Gastrocnemius medialis (tissue), 4 donors: ENCODE measurements at regions of chr14 and their contacts with region 1.

Region 1: GRCh38 chr14:58297762-58298476 is 436 bp upstream of the ARID4A start:
- DNase-seq: peak; percentile 99
- ATAC-seq: peak; percentile 93 to 96
- H3K4me3 ChIP-seq: peak overlapping the region; percentile 92 to 99 (median 97)
- H3K27ac ChIP-seq: peak overlapping the region; percentile 89 to 99 (median 97)
- H3K4me1 ChIP-seq: peaks cover 37 to 56% of the 10 kb centered on the region in 2 donors
- H3K27me3 ChIP-seq: no peaks in the 10 kb centered on the region
- CTCF ChIP-seq: peak in 3 of 5 experiments; percentile 12 to 29 (median 20)
- POLR2A ChIP-seq: peak in 1 of 2 donors; percentile 37

Region 2: DNA sequence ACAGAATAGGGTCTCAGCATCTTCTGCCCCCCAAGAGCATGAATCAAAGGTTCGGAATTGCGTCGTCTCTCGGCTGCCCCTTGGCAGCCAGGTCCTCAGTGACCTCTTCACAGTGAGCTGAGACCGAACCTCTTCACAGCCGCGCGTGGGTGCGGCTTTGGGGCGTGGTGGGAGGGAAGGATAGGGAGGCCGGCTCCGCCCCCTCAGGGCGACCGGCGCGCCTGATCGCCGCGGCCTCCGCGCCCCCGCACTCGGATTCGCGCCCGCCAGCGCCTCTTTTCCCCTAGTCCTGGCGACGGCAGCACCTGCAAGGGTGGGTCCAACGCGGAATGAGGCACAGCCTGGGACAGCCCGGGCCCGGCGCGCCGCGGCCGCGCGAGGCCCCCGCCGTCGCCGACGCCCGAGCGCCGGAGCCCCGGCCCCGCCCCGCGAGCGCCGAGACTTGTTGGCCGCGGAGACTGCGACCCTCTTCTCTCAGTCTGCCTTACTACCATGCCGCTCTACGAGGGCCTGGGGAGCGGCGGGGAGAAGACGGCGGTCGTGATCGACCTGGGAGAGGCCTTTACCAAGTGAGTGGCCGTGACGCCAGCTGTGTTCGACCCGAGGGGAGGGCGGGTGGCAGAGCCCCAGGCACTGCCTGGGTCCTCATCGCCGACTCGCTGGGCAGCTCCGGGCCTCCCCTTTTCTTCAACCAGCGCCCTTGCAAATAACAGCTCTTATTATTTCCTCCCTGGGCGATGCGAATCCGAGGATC is 98.0 kb before region 1 on chr14 and contains the start of gene ACTR10:
- in situ Hi-C with region 1: no loop called
- intact Hi-C with region 1: loop called (anchors 2 kb)
- DNase-seq: peak; percentile 68 to 83
- ATAC-seq: peak; percentile 96
- H3K4me3 ChIP-seq: peak within 1 kb of the TSS; percentile 87 to 94 (median 90)
- H3K27ac ChIP-seq: peak within 1 kb of the TSS; percentile 92 to 94 (median 93)
- H3K4me1 ChIP-seq: peaks cover 4 to 14% of the 10 kb centered on the region in 2 donors
- H3K27me3 ChIP-seq: no peaks in the 10 kb centered on the region
- CTCF ChIP-seq: peak in 1 of 5 experiments; percentile 15
- POLR2A ChIP-seq: peak; percentile 41 to 54
- total RNA-seq, gene ACTR10: 70.6 to 104 (median 88.8) TPM

Region 3: GRCh38 chr14:58244556-58245387 is 53.1 kb before region 1 on chr14 and contains the start of gene PSMA3:
- in situ Hi-C with region 1: loop called in 3 of 4 experiments (anchors 10 kb)
- intact Hi-C with region 1: loop called (anchors 1 kb)
- DNase-seq: peak; percentile 98
- ATAC-seq: peak; percentile 92 to 96
- H3K4me3 ChIP-seq: peak within 1 kb of the TSS; percentile 70 to 95 (median 78)
- H3K27ac ChIP-seq: peak within 1 kb of the TSS; percentile 94 to 99 (median 96)
- H3K4me1 ChIP-seq: peaks cover 27 to 33% of the 10 kb centered on the region in 2 donors
- H3K27me3 ChIP-seq: no peaks in the 10 kb centered on the region
- CTCF ChIP-seq: peak in 1 of 5 experiments; percentile 2
- POLR2A ChIP-seq: peak; percentile 89 to 92
- total RNA-seq, gene PSMA3: 200 to 301 (median 217) TPM

Region 4: DNA sequence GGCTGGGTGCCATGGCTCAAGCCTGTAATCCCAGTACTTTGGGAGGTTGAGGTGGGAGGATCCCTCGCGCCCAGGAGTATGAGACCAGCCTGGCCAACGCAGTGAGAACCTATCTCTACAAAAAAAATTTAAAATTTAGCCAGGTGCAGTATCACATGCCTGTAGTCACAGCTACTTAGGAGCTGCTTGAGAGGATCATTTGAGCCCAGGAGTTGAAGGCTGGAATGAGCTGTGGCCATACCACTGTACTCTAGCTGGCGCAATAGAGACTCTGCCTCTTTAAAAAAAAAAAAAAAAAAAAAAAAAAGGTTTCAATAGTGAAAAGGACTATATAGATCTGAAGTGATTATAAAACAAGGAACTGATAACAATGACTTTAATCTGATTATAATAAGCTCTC is 39.8 kb before region 1 on chr14:
- in situ Hi-C with region 1: no loop called
- intact Hi-C with region 1: no loop called
- DNase-seq: no peak
- ATAC-seq: no peak
- H3K4me3 ChIP-seq: no peak overlapping the region
- H3K27ac ChIP-seq: no peak overlapping the region
- H3K4me1 ChIP-seq: no peaks in the 10 kb centered on the region
- H3K27me3 ChIP-seq: no peaks in the 10 kb centered on the region
- CTCF ChIP-seq: no peak
- POLR2A ChIP-seq: no peak

Region 5: DNA sequence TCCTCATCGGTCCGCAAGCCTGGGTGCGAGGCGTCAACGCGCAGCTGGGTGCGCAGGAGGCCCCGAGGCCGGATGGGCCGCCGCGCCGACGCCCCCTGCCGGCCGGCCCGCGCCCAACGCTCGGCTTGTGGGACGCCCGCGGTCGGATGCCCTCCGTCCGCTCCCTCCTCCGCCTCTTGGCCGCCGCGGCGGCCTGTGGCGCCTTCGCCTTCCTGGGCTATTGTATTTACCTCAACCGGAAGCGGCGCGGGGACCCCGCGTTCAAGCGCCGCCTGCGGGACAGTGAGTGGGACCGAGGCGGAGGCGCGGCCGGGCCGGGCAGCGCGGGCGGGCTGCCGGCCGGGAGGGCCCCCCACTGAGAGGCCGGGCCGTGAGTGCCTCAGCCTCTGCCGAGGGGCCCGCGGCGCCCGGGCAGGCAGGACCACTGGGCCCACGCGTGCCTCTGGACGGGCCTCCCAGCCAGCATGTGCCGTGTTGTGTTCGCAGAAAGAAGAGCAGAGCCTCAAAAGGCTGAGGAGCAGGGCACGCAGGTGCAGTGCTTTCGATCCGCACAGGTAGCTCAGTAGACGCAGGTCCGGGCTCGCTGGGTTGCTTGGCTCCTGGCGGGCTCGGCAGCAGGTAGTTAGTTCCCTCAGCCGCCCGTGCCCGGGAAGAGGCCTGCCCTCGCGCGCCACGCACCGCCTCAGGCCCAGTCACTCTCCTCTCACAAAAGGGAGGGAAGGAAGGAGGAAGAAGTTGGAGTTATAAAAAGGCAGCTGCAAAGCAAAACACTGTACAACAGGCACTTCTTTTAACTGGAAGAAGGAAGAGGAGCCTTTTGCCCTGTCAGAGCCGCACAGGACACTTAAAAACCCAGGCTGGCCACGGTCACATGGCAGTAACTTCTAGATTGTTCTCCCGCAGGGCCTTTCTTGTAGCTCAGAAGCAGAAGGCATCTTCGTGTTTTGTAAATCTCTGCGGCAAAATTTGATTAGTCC is 98.2 kb after region 1 on chr14 and contains the start of gene TOMM20L:
- in situ Hi-C with region 1: no loop called
- intact Hi-C with region 1: no loop called
- DNase-seq: peak; percentile 6 to 30
- ATAC-seq: peak; percentile 84 to 88
- H3K4me3 ChIP-seq: peak within 1 kb of the TSS; percentile 52 to 68 (median 57)
- H3K27ac ChIP-seq: peak within 1 kb of the TSS; percentile 43 to 63 (median 52)
- H3K4me1 ChIP-seq: peaks cover 0 to 4% of the 10 kb centered on the region in 2 donors
- H3K27me3 ChIP-seq: no peaks in the 10 kb centered on the region
- CTCF ChIP-seq: peak; percentile 58 to 91 (median 74)
- POLR2A ChIP-seq: no peak
- total RNA-seq, gene TOMM20L: not detected

Region 6: GRCh38 chr14:58427281-58428117 is 129.6 kb after region 1 on chr14 and contains the starts of genes KIAA0586 and TIMM9:
- in situ Hi-C with region 1: no loop called
- intact Hi-C with region 1: loop called (anchors 2 kb)
- DNase-seq: peak; percentile 95 to 97
- ATAC-seq: peak; percentile 99
- H3K4me3 ChIP-seq: peak within 1 kb of the TSS; percentile 62 to 98 (median 84)
- H3K27ac ChIP-seq: peak within 1 kb of the TSS; percentile 87 to 97 (median 91)
- H3K4me1 ChIP-seq: peaks cover 27 to 34% of the 10 kb centered on the region in 2 donors
- H3K27me3 ChIP-seq: no peaks in the 10 kb centered on the region
- CTCF ChIP-seq: peak in 2 of 5 experiments; percentile 25 to 32
- POLR2A ChIP-seq: peak; percentile 77 to 90
- total RNA-seq, gene KIAA0586: 10.0 to 13.9 (median 11.9) TPM
- total RNA-seq, gene TIMM9: 46.2 to 110 (median 86.8) TPM